Naive thymus-derived CD4-positive, alpha-beta T cell (primary cell): ENCODE measurements at regions of chr3 and their contacts with region 1.

Region 1: DNA sequence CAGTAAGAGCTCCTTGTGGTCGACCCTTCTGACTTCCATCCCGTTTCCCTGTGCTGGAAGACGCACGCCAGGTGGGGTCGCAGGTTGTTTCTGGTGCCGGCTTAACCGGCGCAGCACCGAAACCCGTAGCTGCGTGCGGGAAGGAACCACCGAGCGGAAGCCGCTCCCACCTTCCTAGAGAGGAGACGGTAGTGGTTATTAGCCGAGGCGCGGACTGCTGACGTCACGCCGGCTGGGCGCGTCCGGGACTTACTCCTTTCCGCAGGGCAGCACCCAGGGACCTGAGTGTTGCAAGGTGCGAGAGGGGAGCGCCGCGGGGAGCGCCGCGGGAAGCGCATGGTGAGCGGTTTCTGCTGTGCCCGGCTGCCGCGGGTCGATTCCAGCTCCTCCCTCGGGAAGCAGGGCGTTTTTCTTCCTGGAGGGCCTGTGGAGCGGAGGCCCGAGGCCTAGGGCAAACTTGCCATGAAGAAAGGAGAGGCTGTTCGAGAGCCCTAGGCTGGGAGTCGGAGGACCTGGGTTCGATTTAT is at the start of gene ZNF501:
- DNase-seq: peak; percentile 65 to 83 (median 75)
- ATAC-seq: peak; percentile 97
- H3K4me3 ChIP-seq: peak within 1 kb of the TSS; percentile 75
- H3K4me3 Mint-ChIP-seq: peak within 1 kb of the TSS; percentile 90 to 99 (median 92)
- H3K27ac ChIP-seq: peak within 1 kb of the TSS; percentile 45
- H3K27ac Mint-ChIP-seq: peak within 1 kb of the TSS; percentile 61 to 91 (median 84)
- H3K4me1 ChIP-seq: no peaks in the 10 kb centered on the region
- H3K4me1 Mint-ChIP-seq: peaks cover 2 to 20% (median 15%) of the 10 kb centered on the region in 7 donors
- H3K27me3 ChIP-seq: no peaks in the 10 kb centered on the region
- H3K27me3 Mint-ChIP-seq: no peaks in the 10 kb centered on the region
- total RNA-seq, gene ZNF501: 1.1 to 5.3 (median 2.6) TPM

Region 2: DNA sequence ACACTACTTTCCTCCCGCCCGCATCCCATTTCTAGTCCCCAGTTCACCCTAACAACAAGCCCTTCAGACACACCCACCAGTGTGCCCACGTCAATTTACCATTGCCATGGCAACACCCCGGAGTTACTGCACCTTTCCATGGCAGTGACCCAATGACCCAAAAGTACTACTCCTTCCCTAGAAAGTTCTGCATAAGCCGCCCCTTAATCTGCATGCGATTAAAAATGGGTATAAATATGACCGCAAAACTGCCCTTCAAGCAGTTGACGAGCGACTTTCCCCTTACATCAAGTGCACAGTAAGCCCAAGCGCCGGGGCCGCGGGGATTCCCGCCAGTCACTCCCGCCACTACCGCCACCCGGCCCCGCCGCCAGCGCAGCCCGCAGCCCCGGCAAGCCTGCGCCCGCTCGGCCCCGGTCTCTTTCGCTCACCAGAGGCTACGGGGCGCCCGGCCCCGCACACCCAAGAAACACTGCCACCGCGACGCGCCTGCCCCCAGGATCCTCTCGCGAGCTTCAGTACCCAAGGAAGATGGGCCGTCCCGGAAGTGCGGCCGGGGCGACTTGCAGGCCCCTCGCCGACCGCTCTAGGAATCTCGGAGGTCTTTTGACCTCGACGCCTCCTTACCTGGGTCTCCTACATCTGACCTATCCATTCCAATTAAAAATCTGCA is 44.2 kb before region 1 on chr3:
- CTCF ChIA-PET with region 1: no interaction called
- POLR2A ChIA-PET with region 1: no interaction called
- intact Hi-C with region 1: loop called in 1 of 2 experiments (anchors 1 kb)
- DNase-seq: peak; percentile 7 to 56 (median 31)
- ATAC-seq: peak; percentile 79
- H3K4me3 ChIP-seq: peak overlapping the region; percentile 25
- H3K4me3 Mint-ChIP-seq: peak overlapping the region; percentile 76 to 94 (median 86)
- H3K27ac ChIP-seq: peak overlapping the region; percentile 26
- H3K27ac Mint-ChIP-seq: peak overlapping the region in 8 of 9 donors; percentile 3 to 92 (median 62)
- H3K4me1 ChIP-seq: no peaks in the 10 kb centered on the region
- H3K4me1 Mint-ChIP-seq: peaks cover 7 to 22% (median 17%) of the 10 kb centered on the region in 7 donors
- H3K27me3 ChIP-seq: no peaks in the 10 kb centered on the region
- H3K27me3 Mint-ChIP-seq: peaks cover 12 to 47% (median 28%) of the 10 kb centered on the region in 5 donors

Region 3: GRCh38 chr3:44712455-44713075 is 16.9 kb before region 1 on chr3 and contains the start of gene ZNF502:
- CTCF ChIA-PET with region 1: no interaction called
- POLR2A ChIA-PET with region 1: interaction called, 4 read pairs
- intact Hi-C with region 1: loop called in 1 of 2 experiments (anchors 1 kb)
- DNase-seq: peak; percentile 20 to 60 (median 33)
- ATAC-seq: peak; percentile 81
- H3K4me3 ChIP-seq: peak within 1 kb of the TSS; percentile 65
- H3K4me3 Mint-ChIP-seq: peak within 1 kb of the TSS; percentile 49 to 96 (median 91)
- H3K27ac ChIP-seq: peak within 1 kb of the TSS; percentile 44
- H3K27ac Mint-ChIP-seq: peak within 1 kb of the TSS; percentile 4 to 85 (median 75)
- H3K4me1 ChIP-seq: no peaks in the 10 kb centered on the region
- H3K4me1 Mint-ChIP-seq: peaks cover 4 to 25% (median 16%) of the 10 kb centered on the region in 7 donors
- H3K27me3 ChIP-seq: no peaks in the 10 kb centered on the region
- H3K27me3 Mint-ChIP-seq: peaks cover 0 to 35% (median 16%) of the 10 kb centered on the region in 5 donors
- total RNA-seq, gene ZNF502: 1.1 to 6.1 (median 4.1) TPM

Region 4: GRCh38 chr3:45167011-45167911 is 437.8 kb after region 1 on chr3:
- CTCF ChIA-PET with region 1: no interaction called
- POLR2A ChIA-PET with region 1: no interaction called
- intact Hi-C with region 1: no loop called
- DNase-seq: peak; percentile 56 to 79 (median 74)
- ATAC-seq: peak; percentile 95
- H3K4me3 ChIP-seq: peak overlapping the region; percentile 33
- H3K4me3 Mint-ChIP-seq: peak overlapping the region; percentile 65 to 87 (median 78)
- H3K27ac ChIP-seq: peak overlapping the region; percentile 30
- H3K27ac Mint-ChIP-seq: peak overlapping the region; percentile 82 to 95 (median 90)
- H3K4me1 ChIP-seq: peaks cover 9 to 19% of the 10 kb centered on the region in 2 donors
- H3K4me1 Mint-ChIP-seq: peaks cover 16 to 56% (median 40%) of the 10 kb centered on the region in 7 donors
- H3K27me3 ChIP-seq: no peaks in the 10 kb centered on the region
- H3K27me3 Mint-ChIP-seq: peaks cover 0 to 3% (median 0%) of the 10 kb centered on the region in 5 donors